Posterior cingulate gyrus (tissue), 11 donors: ENCODE measurements at regions of chr5 and their contacts with region 1.

Region 1: GRCh38 chr5:80083101-80083890 is 48.1 kb downstream of the THBS4 start:
- DNase-seq: peak in 2 of 10 donors; percentile 23 to 39

Region 2: GRCh38 chr5:79133657-79134451 is 949.4 kb before region 1 on chr5:
- intact Hi-C with region 1: loop called (anchors 5 kb)
- DNase-seq: peak in 9 of 10 donors; percentile 38 to 90 (median 61)

Region 3: DNA sequence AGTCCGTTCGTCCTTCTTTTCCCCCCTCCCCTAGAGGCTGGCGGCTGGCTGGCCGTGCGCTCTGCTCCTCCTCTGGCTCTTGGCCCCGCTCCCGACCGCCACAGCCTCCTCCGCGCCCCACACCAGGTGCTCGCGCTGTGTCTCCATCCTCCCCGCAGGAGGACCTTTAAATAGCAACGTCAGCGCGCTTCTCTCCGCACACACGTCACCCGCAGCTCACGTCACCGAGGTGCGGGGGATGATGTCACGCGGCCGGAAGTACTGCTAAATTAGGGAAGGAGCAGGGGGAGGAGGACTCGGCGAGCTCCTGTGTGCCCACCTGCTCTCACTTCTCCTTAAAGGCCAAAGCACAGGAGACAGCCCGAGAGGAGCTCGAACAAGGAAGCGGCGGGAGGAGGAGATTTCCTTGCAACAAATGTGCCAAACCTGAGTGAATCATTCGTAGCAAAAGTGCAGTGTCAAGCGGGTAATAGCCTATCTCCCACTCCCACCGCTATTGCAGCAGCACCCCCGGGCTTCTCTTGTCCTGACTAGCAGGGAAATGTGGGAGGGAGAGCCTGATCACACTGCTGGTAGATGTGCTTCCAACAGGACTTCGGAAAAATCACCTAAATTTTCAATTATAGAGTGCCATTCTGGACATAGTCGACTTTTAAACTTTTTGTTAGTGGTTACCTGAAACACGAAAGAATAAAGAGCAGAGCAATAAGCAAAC is 568.7 kb before region 1 on chr5:
- intact Hi-C with region 1: loop called (anchors 5 kb)
- DNase-seq: peak; percentile 79 to 99 (median 90)

Region 4: DNA sequence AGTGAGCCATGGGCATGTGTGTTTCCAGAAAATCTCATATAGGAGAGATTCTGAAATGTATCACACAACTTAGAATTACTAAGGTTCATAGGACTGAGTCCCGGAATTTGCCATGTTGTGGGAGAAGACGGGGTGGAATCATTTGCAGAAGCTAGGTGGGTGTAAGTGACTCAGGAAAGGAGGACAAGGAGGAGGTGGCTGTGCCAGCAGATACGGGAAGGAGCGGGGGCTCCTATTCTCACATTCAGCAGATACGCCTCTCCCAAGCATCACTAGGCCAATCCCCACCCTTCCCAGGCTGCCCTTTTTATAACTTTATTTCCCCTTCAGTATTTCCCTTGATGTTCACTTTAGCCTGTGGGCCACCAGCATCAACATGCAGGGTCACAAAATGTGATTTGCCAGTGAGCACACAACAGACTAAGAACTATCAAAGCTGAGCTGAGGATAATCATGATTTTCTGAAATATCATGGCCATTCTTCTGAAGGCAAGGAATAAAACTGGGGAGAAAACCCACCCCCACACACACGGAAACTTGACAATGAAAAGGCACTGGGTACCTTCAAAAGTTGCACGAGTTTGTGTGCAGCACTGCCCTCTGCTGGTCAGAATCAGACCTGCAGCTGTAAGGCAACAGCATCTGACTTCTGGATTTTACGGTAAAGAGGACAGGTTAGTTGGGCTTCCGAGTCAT is 225.4 kb before region 1 on chr5:
- intact Hi-C with region 1: loop called (anchors 5 kb)
- DNase-seq: peak; percentile 60 to 96 (median 84)